ENCODE measurements at regions of chr9 and their contacts with region 1.

Region 1: GRCh38 chr9:129944506-129945116 is 98.4 kb downstream of the FNBP1 start:
- DNase-seq: peak; percentile 59
- H3K4me3 Mint-ChIP-seq: peak overlapping the region; percentile 28
- H3K27ac Mint-ChIP-seq: peak overlapping the region; percentile 88
- H3K4me1 Mint-ChIP-seq: peaks cover 44% of the 10 kb centered on the region
- H3K27me3 Mint-ChIP-seq: no peaks in the 10 kb centered on the region

Region 2: GRCh38 chr9:129932303-129933151 is 12.1 kb before region 1 on chr9:
- intact Hi-C with region 1: loop called (anchors 1 kb)
- DNase-seq: no peak
- H3K4me3 Mint-ChIP-seq: peak overlapping the region; percentile 66
- H3K27ac Mint-ChIP-seq: peak overlapping the region; percentile 92
- H3K4me1 Mint-ChIP-seq: peaks cover 57% of the 10 kb centered on the region
- H3K27me3 Mint-ChIP-seq: no peaks in the 10 kb centered on the region

Region 3: DNA sequence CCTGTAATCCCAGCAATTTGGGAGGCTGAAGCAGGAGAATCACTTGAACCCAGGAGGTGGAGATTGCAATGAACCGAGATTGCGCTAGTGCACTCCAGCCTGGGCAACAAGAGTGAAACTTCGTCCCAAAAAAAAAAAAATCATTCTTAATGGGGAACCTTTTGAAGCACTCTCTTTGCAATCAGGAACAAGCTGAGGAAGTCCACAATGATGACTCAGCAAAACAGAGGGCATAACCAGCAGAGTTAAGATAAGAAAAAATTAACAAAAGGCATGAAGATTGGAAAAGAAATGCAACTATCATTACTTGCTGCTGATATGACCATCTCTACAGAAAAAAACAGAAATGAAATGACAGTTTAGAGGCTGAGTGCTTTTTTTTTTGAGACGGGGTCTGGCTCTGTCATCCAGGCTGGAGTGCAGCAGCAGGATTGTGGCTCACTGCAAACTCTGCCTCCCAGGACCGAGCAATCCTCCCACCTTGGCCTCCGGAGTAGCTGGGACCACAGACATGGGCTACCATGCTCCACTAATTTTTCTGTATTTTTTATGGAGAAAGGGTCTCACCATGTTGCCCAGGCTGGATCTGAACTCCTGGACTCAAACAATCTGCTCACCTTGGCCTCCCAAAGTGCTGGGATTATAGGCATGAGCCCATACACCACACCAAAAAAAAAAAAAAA is 10.4 kb after region 1 on chr9:
- intact Hi-C with region 1: loop called (anchors 1 kb)
- DNase-seq: no peak
- H3K4me3 Mint-ChIP-seq: peak overlapping the region; percentile 0
- H3K27ac Mint-ChIP-seq: peak overlapping the region; percentile 62
- H3K4me1 Mint-ChIP-seq: peaks cover 16% of the 10 kb centered on the region
- H3K27me3 Mint-ChIP-seq: no peaks in the 10 kb centered on the region

Measured in activated T-helper 1 cell treated with anti-CD3 and anti-CD28 coated beads, Interleukin-12 subunit alpha, Interleukin-12 subunit beta, Interleukin-2, Interleukin-4 antibody, amounts not matched to agents 30 ng/mL and 10 ng/mL and 1 ng/mL, durations not matched to agents 14 hours and 24 hours and 36 hours (primary cell).